ENCODE measurements at regions of chr1 and their contacts with region 1.

Region 1: DNA sequence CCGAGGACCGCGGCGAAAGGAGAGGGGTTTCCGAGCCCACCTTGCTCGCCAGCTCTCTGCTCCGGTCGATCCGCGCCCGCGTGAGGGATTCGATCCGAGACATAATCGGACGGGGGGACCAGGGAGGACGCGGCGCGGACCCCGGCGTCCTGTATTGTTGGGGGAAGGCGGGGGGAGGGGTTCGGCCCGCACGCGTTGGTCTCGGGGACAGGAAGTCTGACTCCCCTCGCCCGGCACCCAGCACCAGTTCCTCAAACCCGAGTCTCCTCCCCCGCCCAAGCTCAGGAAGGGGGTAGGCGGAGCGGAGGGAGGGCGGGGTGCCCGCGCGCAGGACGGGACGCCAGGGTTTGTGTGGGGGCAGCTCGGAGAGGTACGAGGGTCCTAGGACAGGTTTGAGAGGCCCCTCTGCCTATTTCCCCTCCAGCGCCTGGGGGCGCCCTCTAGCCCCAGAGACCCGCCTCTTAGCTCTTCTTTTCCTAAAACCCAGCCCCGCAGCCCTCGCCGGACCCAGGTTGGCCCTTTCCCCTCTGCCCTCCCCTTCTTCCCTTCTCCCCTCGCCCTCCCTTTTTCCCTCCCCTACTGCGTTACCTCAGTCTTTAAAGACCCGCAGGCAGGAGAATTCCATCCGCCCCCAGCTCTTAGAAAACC is at the start of gene ARHGEF2:
- DNase-seq: peak; percentile 71
- H3K4me3 Mint-ChIP-seq: peak within 1 kb of the TSS; percentile 95
- H3K27ac Mint-ChIP-seq: peak within 1 kb of the TSS; percentile 95
- H3K4me1 Mint-ChIP-seq: peaks cover 55% of the 10 kb centered on the region
- H3K27me3 Mint-ChIP-seq: no peaks in the 10 kb centered on the region
- total RNA-seq, gene ARHGEF2: 211 and 216 TPM in 2 replicates

Region 2: GRCh38 chr1:155911156-155912055 is 67.0 kb before region 1 on chr1 and contains the start of gene RIT1:
- intact Hi-C with region 1: loop called (anchors 2 kb)
- DNase-seq: peak; percentile 79
- H3K4me3 Mint-ChIP-seq: peak within 1 kb of the TSS; percentile 92
- H3K27ac Mint-ChIP-seq: peak within 1 kb of the TSS; percentile 94
- H3K4me1 Mint-ChIP-seq: peaks cover 17% of the 10 kb centered on the region
- H3K27me3 Mint-ChIP-seq: no peaks in the 10 kb centered on the region
- total RNA-seq, gene RIT1: 20.0 and 27.0 TPM in 2 replicates

Region 3: GRCh38 chr1:155934097-155934935 is 44.1 kb before region 1 on chr1 and contains the start of gene KHDC4:
- intact Hi-C with region 1: loop called (anchors 1 kb)
- DNase-seq: peak; percentile 96
- H3K4me3 Mint-ChIP-seq: no peak within 1 kb of the TSS
- H3K27ac Mint-ChIP-seq: peak within 1 kb of the TSS; percentile 58
- H3K4me1 Mint-ChIP-seq: peaks cover 28% of the 10 kb centered on the region
- H3K27me3 Mint-ChIP-seq: no peaks in the 10 kb centered on the region
- total RNA-seq, gene KHDC4: 78.4 and 83.5 TPM in 2 replicates

Region 4: DNA sequence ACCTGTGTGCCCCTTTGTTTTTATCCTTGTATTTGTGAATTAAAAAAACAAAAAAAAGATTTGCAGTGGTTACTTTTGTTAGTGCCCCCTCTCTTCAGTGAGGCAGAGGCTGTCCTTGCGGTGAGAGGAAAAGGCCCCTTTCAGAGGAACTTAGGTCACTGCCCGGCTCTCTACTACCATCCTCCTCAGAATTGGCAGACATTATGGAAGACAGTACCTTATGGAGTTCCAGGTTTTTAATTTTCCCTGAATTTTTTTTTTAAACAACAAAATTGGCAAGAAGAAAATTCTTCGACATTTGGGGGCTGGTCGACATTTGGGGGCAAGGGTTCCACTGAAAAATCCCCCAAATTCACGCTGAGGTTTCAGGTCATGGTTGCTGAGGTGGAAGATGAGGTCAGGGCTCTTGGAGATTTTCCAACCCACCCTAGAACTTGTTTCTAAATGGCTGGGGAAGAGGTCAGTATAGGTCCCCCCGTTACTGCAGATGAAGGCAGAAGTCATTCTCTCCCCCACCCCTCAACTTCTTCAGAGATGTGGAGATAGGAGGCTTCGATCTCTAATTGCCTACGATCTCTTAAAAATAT is 31.7 kb before region 1 on chr1:
- intact Hi-C with region 1: loop called (anchors 1 kb)
- DNase-seq: no peak
- H3K4me3 Mint-ChIP-seq: peak overlapping the region; percentile 53
- H3K27ac Mint-ChIP-seq: peak overlapping the region; percentile 83
- H3K4me1 Mint-ChIP-seq: peaks cover 30% of the 10 kb centered on the region
- H3K27me3 Mint-ChIP-seq: no peaks in the 10 kb centered on the region

Region 5: DNA sequence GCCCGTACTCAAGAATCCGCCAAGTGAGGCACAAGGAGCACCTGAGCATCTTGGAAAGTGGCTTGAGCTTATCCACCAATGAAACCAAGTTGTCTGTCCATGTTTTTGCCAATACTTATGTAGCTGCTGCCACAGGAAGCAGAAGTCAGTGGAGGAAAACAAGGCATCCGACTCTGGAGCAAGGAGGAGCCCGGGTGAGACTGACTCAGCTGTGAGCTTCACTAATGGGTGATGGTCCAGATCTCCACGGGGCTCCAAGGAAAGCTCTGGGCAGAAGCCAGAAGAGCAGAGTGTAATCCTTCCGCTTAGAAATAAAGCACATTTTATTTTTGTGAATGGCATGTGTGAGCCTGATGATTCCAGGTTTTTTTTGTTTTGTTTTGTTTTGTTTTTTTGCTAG is 54.6 kb after region 1 on chr1:
- intact Hi-C with region 1: no loop called
- DNase-seq: no peak
- H3K4me3 Mint-ChIP-seq: no peak overlapping the region
- H3K27ac Mint-ChIP-seq: no peak overlapping the region
- H3K4me1 Mint-ChIP-seq: peaks cover 4% of the 10 kb centered on the region
- H3K27me3 Mint-ChIP-seq: no peaks in the 10 kb centered on the region

Measured in activated T-helper 2 cell treated with anti-CD3 and anti-CD28 coated beads, Interferon-gamma antibody, Interleukin-2, Interleukin-4, amounts not matched to agents 10 μg/mL and 5 μg/mL and 100 μg/mL, durations not matched to agents 14 hours and 24 hours and 36 hours (primary cell).